Posterior cingulate gyrus (tissue), 11 donors: ENCODE measurements at regions of chr18 and their contacts with region 1.

Region 1: GRCh38 chr18:22563098-22563707 is 145.5 kb upstream of the CTAGE1 start:
- DNase-seq: peak in 1 of 10 donors; percentile 47

Region 2: DNA sequence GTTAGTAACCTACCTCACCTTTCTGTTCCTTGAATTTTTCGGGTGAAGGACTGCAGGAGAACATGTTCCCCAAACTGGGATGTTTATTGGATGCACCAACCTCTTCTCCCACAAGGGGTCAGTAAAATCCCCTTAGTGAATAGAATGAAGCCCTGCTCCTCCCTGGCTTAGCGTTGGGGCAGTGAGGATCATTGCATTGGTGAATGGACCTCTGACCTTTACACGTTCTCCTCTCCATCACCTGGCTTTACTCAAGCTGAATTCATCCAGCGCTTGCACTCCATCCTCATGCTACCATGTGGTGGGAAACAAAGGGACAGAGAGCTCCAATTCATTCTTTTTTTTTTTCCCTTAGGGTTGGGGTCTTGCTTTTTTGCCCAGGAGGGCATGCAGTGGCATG is 665.4 kb before region 1 on chr18:
- intact Hi-C with region 1: loop called (anchors 1 kb)
- DNase-seq: peak in 2 of 10 donors; percentile 22 to 27

Region 3: GRCh38 chr18:21914739-21915319 is 648.4 kb before region 1 on chr18:
- intact Hi-C with region 1: loop called (anchors 5 kb)
- DNase-seq: no peak

Region 4: GRCh38 chr18:22169007-22169864 is 394.0 kb before region 1 on chr18 and contains the start of gene GATA6:
- intact Hi-C with region 1: loop called (anchors 5 kb)
- DNase-seq: no peak

Region 5: DNA sequence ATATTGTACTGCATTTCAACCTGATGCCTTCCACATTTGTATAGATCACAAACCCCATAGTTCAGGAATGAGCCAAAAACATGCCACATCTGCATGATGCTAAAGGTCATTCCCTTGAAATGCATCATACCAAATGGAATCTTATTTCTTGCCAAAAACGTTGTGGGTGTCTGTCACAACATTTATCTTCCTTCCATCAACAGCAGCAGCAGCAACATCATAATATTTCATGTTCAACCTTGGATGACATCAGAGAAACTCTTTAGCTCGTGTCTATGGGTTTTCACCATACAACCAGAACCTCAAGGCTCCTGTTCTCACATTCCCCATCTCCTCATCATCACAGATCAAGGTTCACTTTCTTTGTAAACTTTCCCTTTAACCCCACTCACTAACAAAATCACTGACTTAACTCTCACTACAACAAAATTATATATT is 75.8 kb after region 1 on chr18:
- intact Hi-C with region 1: no loop called
- DNase-seq: no peak